ENCODE measurements at regions of chr5 and their contacts with region 1.

Region 1: GRCh38 chr5:157535042-157535865 is 40.3 kb downstream of the ADAM19 start:
- DNase-seq: no peak
- H3K4me3 Mint-ChIP-seq: no peak overlapping the region
- H3K27ac Mint-ChIP-seq: peak overlapping the region; percentile 59
- H3K4me1 Mint-ChIP-seq: peaks cover 83% of the 10 kb centered on the region
- H3K27me3 Mint-ChIP-seq: no peaks in the 10 kb centered on the region

Region 2: DNA sequence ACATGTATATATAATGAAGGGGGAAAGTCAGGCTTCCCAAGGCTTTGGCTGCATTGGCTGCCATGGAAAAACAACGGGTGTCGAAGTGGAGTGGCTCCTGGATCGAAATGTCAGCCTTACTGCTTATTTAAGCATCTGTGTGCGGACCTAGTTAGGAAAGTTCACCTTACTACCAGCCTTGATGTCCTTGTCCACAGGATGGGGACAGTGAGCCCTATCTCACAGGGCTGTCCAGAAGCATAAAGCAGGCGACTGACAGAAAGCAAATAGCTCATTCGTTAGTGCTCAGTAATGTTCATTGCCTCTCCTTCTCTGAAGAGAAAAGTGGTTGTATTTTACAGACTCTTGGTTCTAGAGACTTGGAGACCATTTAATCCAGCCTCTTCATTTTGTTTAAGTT is 156.8 kb before region 1 on chr5:
- CTCF ChIA-PET with region 1: no interaction called
- POLR2A ChIA-PET with region 1: no interaction called
- DNase-seq: no peak
- H3K4me3 Mint-ChIP-seq: no peak overlapping the region
- H3K27ac Mint-ChIP-seq: no peak overlapping the region
- H3K4me1 Mint-ChIP-seq: peaks cover 10% of the 10 kb centered on the region
- H3K27me3 Mint-ChIP-seq: no peaks in the 10 kb centered on the region

Region 3: GRCh38 chr5:157486221-157486681 is 49.0 kb before region 1 on chr5:
- CTCF ChIA-PET with region 1: no interaction called
- POLR2A ChIA-PET with region 1: no interaction called
- DNase-seq: no peak
- H3K4me3 Mint-ChIP-seq: no peak overlapping the region
- H3K27ac Mint-ChIP-seq: peak overlapping the region; percentile 63
- H3K4me1 Mint-ChIP-seq: peaks cover 62% of the 10 kb centered on the region
- H3K27me3 Mint-ChIP-seq: no peaks in the 10 kb centered on the region

Region 4: GRCh38 chr5:157520911-157521703 is 14.1 kb before region 1 on chr5:
- CTCF ChIA-PET with region 1: interaction called, 14 read pairs
- POLR2A ChIA-PET with region 1: interaction called, 15 read pairs
- DNase-seq: no peak
- H3K4me3 Mint-ChIP-seq: no peak overlapping the region
- H3K27ac Mint-ChIP-seq: peak overlapping the region; percentile 43
- H3K4me1 Mint-ChIP-seq: peaks cover 68% of the 10 kb centered on the region
- H3K27me3 Mint-ChIP-seq: no peaks in the 10 kb centered on the region

Region 5: DNA sequence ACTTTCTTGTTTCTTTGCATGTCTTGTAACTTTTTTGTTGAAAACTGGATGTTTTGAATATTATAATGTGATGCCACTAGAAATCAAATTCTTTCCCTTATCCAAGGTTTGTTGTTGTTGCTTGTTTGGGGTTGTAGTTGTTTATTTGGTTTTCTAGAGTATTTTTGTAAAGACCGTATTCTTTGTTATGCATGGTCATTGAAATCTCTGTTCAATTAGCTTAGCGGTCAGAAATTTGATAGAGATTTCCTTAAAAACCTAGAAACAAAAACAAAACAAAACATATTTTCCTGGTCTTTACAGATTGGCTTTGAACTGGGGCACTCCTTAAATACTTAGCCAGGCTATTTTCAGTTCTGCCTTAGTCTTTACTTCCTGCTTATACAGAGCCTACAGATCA is 95.1 kb after region 1 on chr5:
- CTCF ChIA-PET with region 1: no interaction called
- POLR2A ChIA-PET with region 1: no interaction called
- DNase-seq: no peak
- H3K4me3 Mint-ChIP-seq: no peak overlapping the region
- H3K27ac Mint-ChIP-seq: no peak overlapping the region
- H3K4me1 Mint-ChIP-seq: no peaks in the 10 kb centered on the region
- H3K27me3 Mint-ChIP-seq: peaks cover 2% of the 10 kb centered on the region